Right ventricle myocardium superior (tissue), 1 donor: ENCODE measurements at regions of chr13 and their contacts with region 1.

Region 1: DNA sequence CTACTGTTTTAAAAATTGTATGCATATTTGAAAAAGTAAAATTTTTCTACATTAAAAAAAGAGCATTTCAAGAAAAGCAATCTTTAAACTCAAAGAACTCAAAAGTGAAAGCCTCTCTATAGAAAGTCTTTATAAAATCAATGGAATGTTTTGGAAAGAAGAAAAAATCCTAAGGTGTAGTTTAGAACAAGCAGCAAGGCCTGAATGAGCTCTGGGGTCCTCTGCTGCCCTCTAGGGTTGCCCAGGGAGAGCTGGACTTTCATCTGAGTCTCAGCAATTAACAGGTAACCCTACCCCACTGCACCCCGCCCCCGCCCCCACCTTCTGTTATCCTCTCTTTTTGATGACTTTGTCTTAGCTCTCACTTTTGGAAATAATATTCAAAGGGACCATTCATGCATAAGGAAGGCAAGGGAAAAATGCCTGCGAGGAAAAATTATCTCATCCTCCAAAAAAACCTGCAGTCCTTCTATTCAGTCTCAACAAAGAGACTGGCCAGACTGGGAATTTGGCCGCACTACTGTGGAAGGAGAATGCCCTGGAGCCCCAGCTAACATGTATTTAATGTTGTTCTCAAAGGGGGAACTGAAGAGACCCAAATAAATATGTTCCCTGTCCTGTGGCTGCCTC is 24.1 kb downstream of the SLC25A30 start:
- DNase-seq: no peak
- ATAC-seq: peak; percentile 63

Region 2: DNA sequence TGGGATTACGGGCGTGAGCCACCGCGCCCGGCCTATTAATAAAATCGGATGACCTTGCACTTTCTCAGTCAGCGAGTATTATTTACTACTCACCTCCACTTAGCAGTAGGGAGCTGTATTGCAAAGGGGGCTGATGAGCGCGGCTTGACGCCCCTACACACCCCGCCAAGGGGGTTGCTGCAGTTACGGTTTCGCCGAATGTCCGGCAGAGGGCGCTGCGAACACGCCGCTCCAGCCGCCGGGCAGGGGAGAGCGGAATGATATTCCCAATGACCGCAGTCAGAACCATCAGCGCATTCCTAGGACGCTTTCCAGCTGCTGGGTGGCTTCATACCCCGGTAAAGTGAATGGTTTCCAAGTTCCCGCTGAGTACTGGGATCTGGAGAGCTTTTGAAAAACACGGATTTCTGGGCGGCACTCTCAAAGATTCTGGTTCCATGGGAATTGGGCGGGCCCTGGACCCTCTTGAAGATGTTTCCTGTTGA is 23.1 kb before region 1 on chr13:
- intact Hi-C with region 1: loop called (anchors 1 kb)
- DNase-seq: peak; percentile 81
- ATAC-seq: peak; percentile 91